ENCODE measurements at regions of chr10 and their contacts with region 1.

Region 1: DNA sequence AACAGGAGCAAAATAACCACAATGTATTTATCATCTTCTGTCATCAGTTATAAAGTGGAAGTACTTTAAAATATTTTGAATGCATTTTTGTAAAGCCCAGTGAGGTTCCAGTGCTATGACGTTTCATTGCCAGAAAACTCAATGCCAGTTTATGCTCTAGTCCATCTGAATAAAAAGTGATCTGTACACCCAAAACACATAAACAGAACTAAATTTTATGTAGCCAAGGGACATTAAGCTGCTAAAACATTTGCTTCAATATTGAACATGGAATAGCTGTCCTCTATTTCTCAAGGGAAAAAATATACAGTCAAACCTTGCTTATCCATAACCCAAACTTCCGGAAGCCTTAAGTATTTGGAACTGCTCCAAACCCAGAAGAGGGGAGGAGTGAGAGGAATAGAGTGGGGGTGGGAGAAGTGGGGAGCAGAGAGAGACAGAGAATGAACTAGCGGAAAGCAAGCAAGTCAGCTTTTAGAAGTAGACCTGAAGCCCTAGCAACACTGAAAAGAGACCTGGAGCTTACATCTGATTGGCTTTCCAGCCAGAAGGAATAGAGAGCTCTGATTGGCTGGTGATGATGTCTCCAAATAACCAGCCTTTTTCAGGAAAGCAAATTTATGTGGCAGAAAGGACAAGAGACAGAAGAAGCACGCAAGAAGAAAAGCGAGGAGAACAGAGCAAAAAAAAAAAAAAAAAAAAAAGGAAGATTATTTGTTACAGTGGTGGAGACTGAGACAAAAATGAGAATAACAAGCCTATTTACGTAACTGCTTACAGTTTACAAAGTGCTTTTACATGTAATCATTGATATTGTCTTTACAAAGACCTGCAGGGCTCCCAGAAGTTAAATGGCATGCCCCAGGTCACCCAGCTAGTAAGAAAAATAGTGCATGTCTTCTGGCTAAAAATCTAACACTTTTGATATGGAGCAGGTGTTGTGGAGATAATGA is 196.0 kb downstream of the RNLS start:
- DNase-seq: peak in 7 of 9 donors; percentile 45 to 66 (median 54)
- ATAC-seq: peak; percentile 57
- H3K4me3 ChIP-seq: peak overlapping the region; percentile 45
- H3K4me3 Mint-ChIP-seq: no peak overlapping the region
- H3K27ac ChIP-seq: peak overlapping the region; percentile 82
- H3K27ac Mint-ChIP-seq: no peak overlapping the region
- H3K4me1 ChIP-seq: peaks cover 44 to 69% of the 10 kb centered on the region in 2 donors
- H3K4me1 Mint-ChIP-seq: peaks cover 6 to 41% (median 37%) of the 10 kb centered on the region in 7 donors
- H3K27me3 ChIP-seq: no peaks in the 10 kb centered on the region
- H3K27me3 Mint-ChIP-seq: no peaks in the 10 kb centered on the region

Region 2: DNA sequence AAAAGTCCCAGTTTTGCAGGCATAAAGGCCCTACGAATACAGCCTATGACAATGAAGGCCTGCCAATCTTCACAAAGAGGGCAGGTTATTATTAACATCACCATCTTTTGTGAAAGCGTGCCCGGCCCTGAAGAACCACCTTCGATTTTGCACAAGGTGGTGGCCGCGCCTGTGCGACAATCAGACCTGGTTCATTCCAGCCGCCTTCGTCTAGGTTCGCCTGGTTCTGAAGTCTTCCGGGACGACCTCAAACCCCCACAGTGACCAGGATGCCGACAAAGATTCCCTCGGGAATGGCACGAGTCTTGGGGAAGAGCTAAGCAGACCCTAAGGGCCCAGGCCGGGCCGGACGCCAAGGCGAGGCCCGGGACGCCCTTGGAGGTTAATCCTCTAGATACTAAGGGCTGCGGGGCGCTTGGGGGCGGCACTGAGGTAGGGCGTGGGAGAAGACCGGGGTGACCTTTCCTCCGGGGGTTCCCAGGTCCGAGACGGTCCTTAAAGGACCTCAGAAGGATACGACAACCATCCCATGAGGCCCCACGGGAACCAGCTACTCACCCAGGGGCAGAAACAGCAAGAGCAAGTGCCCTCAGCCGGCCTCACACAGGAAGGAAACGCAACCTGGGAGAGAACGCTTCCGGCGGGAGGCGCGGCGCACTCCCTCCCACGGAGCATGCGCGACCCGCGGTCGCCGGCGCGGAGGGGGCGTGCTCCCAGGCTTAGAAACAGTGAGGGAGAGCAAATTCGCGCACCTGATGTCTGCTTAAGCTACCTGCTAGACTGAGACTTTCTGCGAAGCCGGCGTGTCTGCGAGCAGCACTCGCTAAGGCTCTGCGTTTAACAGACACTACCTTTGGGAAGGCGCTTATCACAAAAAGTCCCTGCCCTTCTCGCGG is 569.2 kb before region 1 on chr10 and contains the start of gene ATAD1:
- CTCF ChIA-PET with region 1: no interaction called
- POLR2A ChIA-PET with region 1: interaction called, 12 read pairs
- intact Hi-C with region 1: loop called (anchors 1 kb)
- DNase-seq: peak; percentile 79 to 93 (median 91)
- ATAC-seq: peak; percentile 92
- H3K4me3 ChIP-seq: peak within 1 kb of the TSS; percentile 75
- H3K4me3 Mint-ChIP-seq: peak within 1 kb of the TSS; percentile 90 to 100 (median 94)
- H3K27ac ChIP-seq: peak within 1 kb of the TSS; percentile 89
- H3K27ac Mint-ChIP-seq: peak within 1 kb of the TSS; percentile 93 to 100 (median 98)
- H3K4me1 ChIP-seq: peaks cover 13 to 33% of the 10 kb centered on the region in 2 donors
- H3K4me1 Mint-ChIP-seq: peaks cover 22 to 56% (median 41%) of the 10 kb centered on the region in 7 donors
- H3K27me3 ChIP-seq: no peaks in the 10 kb centered on the region
- H3K27me3 Mint-ChIP-seq: peaks cover 0 to 2% (median 0%) of the 10 kb centered on the region in 5 donors
- total RNA-seq, gene ATAD1: 33.5 to 53.4 (median 46.1) TPM

Region 3: DNA sequence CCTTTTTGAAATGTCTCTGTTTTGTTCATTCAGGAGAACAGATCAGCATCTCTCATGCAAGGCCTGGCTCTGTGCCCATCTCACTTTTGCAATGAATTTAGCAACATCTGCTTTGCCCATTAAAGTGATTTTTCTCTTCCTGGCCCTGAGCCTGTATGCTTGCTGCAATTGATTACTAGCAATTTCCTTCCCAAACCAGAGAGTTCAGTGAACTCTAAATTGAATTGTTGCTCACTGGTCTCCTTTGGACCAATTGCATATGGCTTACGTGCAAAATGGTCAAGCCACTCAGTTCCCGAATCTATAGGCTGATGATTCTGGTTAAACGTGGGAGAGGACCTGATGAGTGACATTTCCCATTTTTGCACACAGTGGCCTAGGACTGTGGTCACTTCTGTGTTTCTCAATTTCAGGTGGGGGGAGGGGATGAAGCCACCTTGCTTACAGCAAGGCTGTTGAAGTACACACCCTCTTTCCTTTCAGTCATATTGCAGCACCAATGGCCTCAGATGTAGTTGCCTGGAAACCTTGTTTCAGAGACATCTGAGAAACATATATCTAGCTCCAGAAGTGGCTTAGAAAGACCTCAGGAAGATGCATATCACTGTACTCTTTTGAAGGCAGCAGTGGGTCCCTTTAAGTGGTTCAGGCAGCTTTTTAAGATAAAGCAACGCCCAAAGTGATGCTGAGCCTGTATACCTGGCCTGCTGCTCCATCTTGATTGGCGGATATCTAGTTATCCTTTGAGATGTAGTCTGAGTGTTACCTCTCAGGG is 322.3 kb before region 1 on chr10:
- CTCF ChIA-PET with region 1: interaction called, 3 read pairs
- POLR2A ChIA-PET with region 1: interaction called, 3 read pairs
- intact Hi-C with region 1: loop called in 1 of 2 experiments (anchors 1 kb)
- DNase-seq: peak in 7 of 9 donors; percentile 72 to 93 (median 87)
- ATAC-seq: peak; percentile 92
- H3K4me3 ChIP-seq: no peak overlapping the region
- H3K4me3 Mint-ChIP-seq: peak overlapping the region; percentile 14 to 77 (median 66)
- H3K27ac ChIP-seq: peak overlapping the region; percentile 67
- H3K27ac Mint-ChIP-seq: peak overlapping the region; percentile 26 to 99 (median 95)
- H3K4me1 ChIP-seq: peaks cover 6 to 77% of the 10 kb centered on the region in 2 donors
- H3K4me1 Mint-ChIP-seq: peaks cover 0 to 83% (median 65%) of the 10 kb centered on the region in 7 donors
- H3K27me3 ChIP-seq: no peaks in the 10 kb centered on the region
- H3K27me3 Mint-ChIP-seq: peaks cover 0 to 4% (median 0%) of the 10 kb centered on the region in 5 donors

Region 4: DNA sequence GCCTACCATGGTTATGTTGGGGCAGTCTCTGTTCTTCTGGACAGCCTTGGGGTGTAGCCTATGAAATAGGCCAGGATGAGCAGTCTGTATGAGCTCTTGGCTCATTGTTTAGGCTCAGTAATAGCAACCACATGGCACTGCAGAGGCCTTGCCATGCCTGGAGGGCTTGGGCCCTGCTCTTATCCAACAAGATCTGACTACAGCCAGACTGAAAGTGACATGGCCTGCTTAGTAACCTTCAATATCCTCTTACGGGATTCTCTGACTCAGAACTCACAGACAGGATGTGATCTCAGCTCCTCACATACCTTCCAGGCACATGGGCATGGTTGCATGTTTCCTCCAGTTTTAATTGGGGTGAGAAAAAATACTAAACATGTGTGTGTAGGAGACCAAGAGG is 234.4 kb before region 1 on chr10:
- CTCF ChIA-PET with region 1: interaction called, 4 read pairs
- POLR2A ChIA-PET with region 1: no interaction called
- intact Hi-C with region 1: loop called in 1 of 2 experiments (anchors 2 kb)
- DNase-seq: peak in 5 of 9 donors; percentile 3 to 38 (median 10)
- ATAC-seq: peak; percentile 66
- H3K4me3 ChIP-seq: no peak overlapping the region
- H3K4me3 Mint-ChIP-seq: peak overlapping the region in 1 of 10 donors; percentile 67
- H3K27ac ChIP-seq: no peak overlapping the region
- H3K27ac Mint-ChIP-seq: peak overlapping the region in 4 of 9 donors; percentile 4 to 91 (median 79)
- H3K4me1 ChIP-seq: no peaks in the 10 kb centered on the region
- H3K4me1 Mint-ChIP-seq: peaks cover 4 to 25% (median 13%) of the 10 kb centered on the region in 7 donors
- H3K27me3 ChIP-seq: no peaks in the 10 kb centered on the region
- H3K27me3 Mint-ChIP-seq: no peaks in the 10 kb centered on the region

Region 5: DNA sequence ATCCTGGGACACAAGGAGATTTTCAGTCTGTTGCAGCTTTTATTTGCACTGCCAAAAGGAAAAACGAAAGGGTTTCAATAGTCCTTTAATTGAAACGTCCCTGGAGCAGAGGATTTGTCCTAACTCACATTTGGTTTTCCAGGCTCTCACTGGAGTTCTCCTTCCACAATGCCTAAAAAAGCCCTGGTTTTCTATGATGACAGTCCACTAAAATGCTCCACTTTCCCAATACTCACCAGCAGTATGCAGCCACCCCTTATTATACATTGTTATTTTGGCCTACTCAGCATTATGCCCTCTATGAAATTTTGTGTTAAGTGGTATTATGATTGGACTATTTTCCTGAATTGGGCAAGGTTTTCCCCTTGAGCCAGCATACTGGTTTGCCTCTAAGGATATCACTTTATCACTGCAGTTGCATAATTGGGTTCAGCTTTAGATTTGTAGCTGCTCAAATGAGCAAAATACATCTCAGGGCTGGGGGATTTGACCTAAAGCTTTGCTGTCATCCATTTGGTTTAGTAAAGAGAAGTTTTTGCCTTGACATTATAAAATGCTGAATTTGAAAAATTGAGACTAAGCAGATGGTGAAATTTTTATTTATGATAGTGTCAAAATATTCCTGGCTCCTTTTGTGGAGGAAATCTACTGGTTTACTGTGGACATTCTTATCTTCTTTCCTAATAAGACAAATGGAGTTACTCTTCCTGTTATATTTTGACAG is 43.2 kb before region 1 on chr10:
- CTCF ChIA-PET with region 1: no interaction called
- POLR2A ChIA-PET with region 1: no interaction called
- intact Hi-C with region 1: loop called in 1 of 2 experiments (anchors 1 kb)
- DNase-seq: no peak
- ATAC-seq: no peak
- H3K4me3 ChIP-seq: no peak overlapping the region
- H3K4me3 Mint-ChIP-seq: no peak overlapping the region
- H3K27ac ChIP-seq: no peak overlapping the region
- H3K27ac Mint-ChIP-seq: no peak overlapping the region
- H3K4me1 ChIP-seq: no peaks in the 10 kb centered on the region
- H3K4me1 Mint-ChIP-seq: peaks cover 0 to 42% (median 11%) of the 10 kb centered on the region in 7 donors
- H3K27me3 ChIP-seq: no peaks in the 10 kb centered on the region
- H3K27me3 Mint-ChIP-seq: peaks cover 0 to 17% (median 0%) of the 10 kb centered on the region in 5 donors

Region 6: DNA sequence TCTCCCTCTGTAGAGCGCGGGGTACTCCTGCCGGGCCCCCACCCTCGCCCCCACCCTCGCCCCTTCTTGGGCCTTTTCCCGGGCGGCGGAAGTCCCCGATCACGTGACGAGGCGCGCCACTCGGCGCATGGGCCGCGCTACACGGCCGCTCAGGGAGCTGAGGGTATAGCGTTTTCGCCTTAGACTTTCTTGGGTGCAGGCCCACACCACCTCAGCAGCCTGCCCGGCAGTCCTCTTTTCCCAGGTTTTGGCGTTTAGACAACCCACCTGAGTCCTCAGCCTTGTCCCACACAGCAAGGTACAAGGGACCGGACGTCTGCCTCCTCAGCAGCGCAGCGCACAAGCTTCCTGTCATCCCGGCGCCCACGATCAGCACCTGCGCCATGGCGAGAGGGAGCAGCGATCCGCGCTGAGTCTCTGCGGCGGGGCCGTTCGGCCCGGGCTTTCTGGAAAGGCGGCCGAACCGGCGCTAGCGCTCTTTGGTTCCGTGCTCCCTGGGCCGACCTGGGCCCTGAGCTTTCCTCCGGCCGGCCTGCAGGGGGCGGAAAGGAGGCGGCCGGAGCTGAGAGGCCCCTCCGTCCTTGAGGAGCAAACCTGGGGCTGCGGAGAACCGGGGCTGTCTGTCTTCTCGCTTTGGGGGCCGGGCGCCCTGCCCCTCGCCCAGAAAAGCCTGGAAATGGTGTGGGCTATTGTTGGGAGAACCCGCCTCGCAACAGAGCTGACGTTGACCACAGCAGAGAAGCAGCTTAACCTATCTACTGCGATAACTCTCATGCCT is 195.9 kb after region 1 on chr10 and contains the start of gene RNLS:
- CTCF ChIA-PET with region 1: no interaction called
- POLR2A ChIA-PET with region 1: interaction called, 3 read pairs
- intact Hi-C with region 1: loop called in 1 of 2 experiments (anchors 2 kb)
- DNase-seq: peak; percentile 46 to 66 (median 62)
- ATAC-seq: peak; percentile 90
- H3K4me3 ChIP-seq: peak within 1 kb of the TSS; percentile 90
- H3K4me3 Mint-ChIP-seq: peak within 1 kb of the TSS; percentile 88 to 95 (median 90)
- H3K27ac ChIP-seq: peak within 1 kb of the TSS; percentile 80
- H3K27ac Mint-ChIP-seq: peak within 1 kb of the TSS; percentile 84 to 97 (median 91)
- H3K4me1 ChIP-seq: peaks cover 6 to 8% of the 10 kb centered on the region in 2 donors
- H3K4me1 Mint-ChIP-seq: peaks cover 8 to 16% (median 12%) of the 10 kb centered on the region in 7 donors
- H3K27me3 ChIP-seq: no peaks in the 10 kb centered on the region
- H3K27me3 Mint-ChIP-seq: peaks cover 0 to 19% (median 4%) of the 10 kb centered on the region in 5 donors
- total RNA-seq, gene RNLS: 1.5 to 3.6 (median 2.9) TPM

Region 7: GRCh38 chr10:88990384-88991160 is 603.5 kb after region 1 on chr10 and contains the start of gene FAS:
- CTCF ChIA-PET with region 1: no interaction called
- POLR2A ChIA-PET with region 1: no interaction called
- intact Hi-C with region 1: loop called (anchors 5 to 10 kb)
- DNase-seq: peak; percentile 50 to 81 (median 61)
- ATAC-seq: peak; percentile 86
- H3K4me3 ChIP-seq: peak within 1 kb of the TSS; percentile 86
- H3K4me3 Mint-ChIP-seq: peak within 1 kb of the TSS; percentile 92 to 100 (median 96)
- H3K27ac ChIP-seq: peak within 1 kb of the TSS; percentile 77
- H3K27ac Mint-ChIP-seq: peak within 1 kb of the TSS; percentile 91 to 96 (median 94)
- H3K4me1 ChIP-seq: peaks cover 42 to 45% of the 10 kb centered on the region in 2 donors
- H3K4me1 Mint-ChIP-seq: peaks cover 41 to 83% (median 68%) of the 10 kb centered on the region in 7 donors
- H3K27me3 ChIP-seq: no peaks in the 10 kb centered on the region
- H3K27me3 Mint-ChIP-seq: no peaks in the 10 kb centered on the region
- total RNA-seq, gene FAS: 5.6 to 67.4 (median 8.3) TPM

Measured in naive thymus-derived CD4-positive, alpha-beta T cell (primary cell).